Spleen (tissue), 13 donors: ENCODE measurements at regions of chr3 and their contacts with region 1.

Region 1: DNA sequence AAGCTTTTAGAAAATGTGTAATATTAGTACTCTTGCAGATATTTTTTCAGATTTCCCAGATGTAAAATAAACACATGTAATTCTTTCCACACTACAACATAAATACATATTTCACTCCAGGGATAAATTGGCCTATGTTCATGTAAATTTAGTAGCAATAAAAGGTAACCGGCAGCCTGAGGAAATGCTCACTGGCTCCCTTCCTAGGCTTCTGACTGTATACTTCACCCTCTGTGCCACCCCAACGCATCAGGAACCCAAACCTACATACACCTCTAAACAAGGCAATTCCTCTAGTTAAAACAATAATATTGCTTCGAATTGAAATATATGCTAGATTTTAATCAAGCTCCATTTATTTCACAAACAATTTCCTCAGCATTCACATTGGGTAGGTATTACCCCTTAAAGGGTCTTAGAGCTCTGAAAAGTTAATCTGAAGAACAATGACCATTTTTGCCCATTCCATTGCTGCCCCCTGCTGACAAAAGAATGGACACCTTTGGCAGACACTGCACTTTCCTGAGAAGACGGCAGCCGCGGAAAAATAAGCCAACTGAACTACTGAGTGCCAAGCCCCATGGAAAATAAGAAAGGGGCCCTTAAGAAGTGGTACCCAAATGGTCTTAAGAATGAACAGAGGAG is 212.5 kb downstream of the OSBPL10 start:
- DNase-seq: no peak
- H3K4me3 ChIP-seq: no peak overlapping the region
- H3K27ac ChIP-seq: no peak overlapping the region
- H3K4me1 ChIP-seq: peaks cover 0 to 20% (median 3%) of the 10 kb centered on the region in 6 donors
- H3K27me3 ChIP-seq: no peaks in the 10 kb centered on the region
- CTCF ChIP-seq: peak; percentile 15 to 71 (median 57)
- POLR2A ChIP-seq: no peak

Region 2: DNA sequence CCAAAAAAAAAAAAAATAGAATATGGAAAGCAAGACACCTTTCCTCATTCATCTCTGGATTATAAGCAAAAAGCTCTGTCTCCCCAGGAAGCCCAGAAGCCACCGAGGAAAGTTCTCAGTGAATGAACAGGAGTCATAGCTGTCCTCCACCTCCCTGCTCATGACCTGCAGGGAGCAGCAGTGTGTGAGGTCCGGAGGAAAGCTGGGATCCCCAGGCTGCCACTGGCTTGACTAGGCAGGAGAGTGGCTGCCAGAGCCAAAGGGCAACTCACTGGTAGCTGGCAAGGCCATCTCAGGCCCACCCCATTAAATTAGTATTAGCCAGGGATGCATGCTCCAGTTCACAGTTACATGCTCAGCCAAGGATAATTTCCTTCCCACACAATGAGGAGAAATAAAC is 427.5 kb before region 1 on chr3:
- intact Hi-C with region 1: no loop called
- DNase-seq: no peak
- H3K4me3 ChIP-seq: no peak overlapping the region
- H3K27ac ChIP-seq: no peak overlapping the region
- H3K4me1 ChIP-seq: no peaks in the 10 kb centered on the region
- H3K27me3 ChIP-seq: no peaks in the 10 kb centered on the region
- CTCF ChIP-seq: no peak
- POLR2A ChIP-seq: no peak

Region 3: GRCh38 chr3:31610700-31611275 is 157.8 kb before region 1 on chr3:
- intact Hi-C with region 1: loop called (anchors 10 kb)
- DNase-seq: no peak
- H3K4me3 ChIP-seq: no peak overlapping the region
- H3K27ac ChIP-seq: no peak overlapping the region
- H3K4me1 ChIP-seq: peaks cover 0 to 40% (median 13%) of the 10 kb centered on the region in 6 donors
- H3K27me3 ChIP-seq: no peaks in the 10 kb centered on the region
- CTCF ChIP-seq: peak; percentile 12 to 68 (median 53)
- POLR2A ChIP-seq: no peak

Region 4: DNA sequence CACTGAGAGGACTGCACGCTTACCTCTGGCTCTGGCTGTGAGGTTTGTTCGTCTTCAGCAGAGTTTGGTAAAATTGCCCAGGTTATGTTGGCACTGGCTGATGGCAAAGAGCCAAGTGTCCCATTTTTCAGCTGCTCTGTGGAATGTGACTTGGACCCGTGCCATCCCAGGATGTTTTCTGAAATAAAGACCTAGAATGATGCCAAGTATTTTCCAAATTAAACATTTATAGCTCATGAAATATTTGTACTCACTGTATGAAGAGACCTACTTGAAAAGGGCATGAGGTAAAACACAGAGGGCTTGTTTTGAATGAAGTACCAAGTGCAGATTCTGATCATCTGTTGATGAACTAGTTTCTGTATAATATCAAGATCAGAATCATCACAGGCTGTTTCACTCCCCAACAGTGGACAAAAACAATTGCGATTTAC is 35.4 kb before region 1 on chr3:
- intact Hi-C with region 1: no loop called
- DNase-seq: no peak
- H3K4me3 ChIP-seq: no peak overlapping the region
- H3K27ac ChIP-seq: no peak overlapping the region
- H3K4me1 ChIP-seq: peaks cover 0 to 17% (median 8%) of the 10 kb centered on the region in 6 donors
- H3K27me3 ChIP-seq: no peaks in the 10 kb centered on the region
- CTCF ChIP-seq: no peak
- POLR2A ChIP-seq: no peak

Region 5: DNA sequence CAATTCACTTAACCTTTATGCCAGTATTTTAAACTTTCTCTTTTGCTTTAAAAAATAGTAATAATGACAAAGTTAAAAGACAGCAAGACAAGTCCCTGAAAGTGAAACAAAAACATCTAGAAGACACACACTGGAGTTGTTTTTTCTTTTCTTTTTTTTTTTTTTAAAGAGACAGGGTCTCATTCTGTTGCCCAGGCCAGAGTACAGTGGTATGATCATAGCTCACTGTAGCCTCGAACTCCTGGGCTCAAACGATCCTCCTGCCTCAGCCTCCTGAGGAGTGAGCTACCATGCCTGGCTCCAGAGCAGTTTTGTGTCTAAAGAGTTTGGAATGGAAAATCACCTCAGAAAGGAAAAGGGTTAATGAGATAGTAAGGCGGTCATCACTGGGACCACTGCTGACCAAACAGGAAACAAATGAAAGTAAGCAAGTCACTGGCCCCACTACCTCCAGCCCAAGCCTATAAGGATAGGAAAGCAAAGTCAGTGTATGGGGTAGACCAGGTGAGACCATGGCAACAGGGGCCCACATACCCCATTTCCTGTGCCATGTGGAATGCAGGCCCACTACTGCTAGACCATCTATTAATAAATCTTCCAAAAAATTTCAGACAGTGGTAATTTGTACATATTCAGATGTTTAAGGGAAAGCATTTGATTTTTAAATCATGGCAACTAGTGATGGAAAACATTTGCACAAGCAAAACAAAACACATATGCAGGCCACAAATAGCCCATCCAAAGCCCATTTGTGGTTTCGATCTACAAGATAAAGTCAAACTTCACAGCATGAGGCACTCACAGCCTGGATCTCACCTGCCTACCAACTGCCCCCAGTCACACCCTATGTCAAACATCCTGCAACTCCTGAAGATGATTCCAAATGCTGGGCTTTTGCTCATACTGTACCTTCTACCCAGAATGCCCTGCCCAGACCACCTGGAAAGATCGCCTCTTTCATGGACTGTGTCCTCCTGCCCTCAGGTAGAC is 149.9 kb after region 1 on chr3:
- intact Hi-C with region 1: no loop called
- DNase-seq: no peak
- H3K4me3 ChIP-seq: peak overlapping the region in 2 of 8 donors; percentile 15 to 38
- H3K27ac ChIP-seq: peak overlapping the region in 7 of 8 donors; percentile 59 to 86 (median 75)
- H3K4me1 ChIP-seq: peaks cover 3 to 57% (median 35%) of the 10 kb centered on the region in 6 donors
- H3K27me3 ChIP-seq: no peaks in the 10 kb centered on the region
- CTCF ChIP-seq: no peak
- POLR2A ChIP-seq: no peak

Region 6: GRCh38 chr3:32048487-32049182 is 280.0 kb after region 1 on chr3:
- intact Hi-C with region 1: no loop called
- DNase-seq: no peak
- H3K4me3 ChIP-seq: no peak overlapping the region
- H3K27ac ChIP-seq: peak overlapping the region in 2 of 8 donors; percentile 11 to 40
- H3K4me1 ChIP-seq: no peaks in the 10 kb centered on the region
- H3K27me3 ChIP-seq: no peaks in the 10 kb centered on the region
- CTCF ChIP-seq: no peak
- POLR2A ChIP-seq: no peak